ENCODE measurements at regions of chr11 and their contacts with region 1.

Region 1: DNA sequence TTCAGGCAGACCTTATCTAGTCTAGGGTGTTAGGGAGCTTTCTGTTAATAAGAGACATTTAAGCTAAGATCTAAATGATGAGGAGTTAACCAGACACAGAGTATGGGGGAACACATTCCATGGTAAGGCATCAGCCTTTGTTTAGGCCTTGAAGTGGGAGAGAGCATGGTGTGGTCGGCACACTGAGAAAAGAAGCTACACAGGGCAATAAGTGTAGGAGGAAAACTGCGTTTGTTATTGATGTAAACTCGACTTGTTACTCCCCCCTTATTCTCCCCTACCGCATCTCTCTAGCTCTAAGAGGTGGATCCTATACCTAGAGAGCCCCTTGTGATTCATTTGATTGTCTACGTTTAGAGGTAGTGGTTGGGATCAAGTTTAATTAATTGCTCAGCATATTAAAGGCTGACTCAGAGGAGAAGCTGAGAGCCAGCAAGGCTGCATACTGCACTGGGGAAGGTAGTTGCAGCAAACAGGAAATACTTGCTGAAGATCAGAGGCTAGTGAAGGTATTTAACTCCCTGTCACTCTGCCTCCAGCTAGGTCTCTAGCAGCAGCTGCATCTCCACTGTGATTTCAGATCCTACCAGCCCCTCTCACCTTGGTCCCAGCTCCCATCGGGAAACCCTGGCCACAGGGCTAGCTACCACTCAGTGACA is 86.8 kb upstream of the TEAD1 start:
- DNase-seq: peak in 3 of 9 donors; percentile 5 to 24 (median 14)
- ATAC-seq: peak; percentile 22
- H3K4me3 ChIP-seq: no peak overlapping the region
- H3K4me3 Mint-ChIP-seq: no peak overlapping the region
- H3K27ac ChIP-seq: no peak overlapping the region
- H3K27ac Mint-ChIP-seq: no peak overlapping the region
- H3K4me1 ChIP-seq: peaks cover 0 to 3% of the 10 kb centered on the region in 2 donors
- H3K4me1 Mint-ChIP-seq: peaks cover 0 to 19% (median 10%) of the 10 kb centered on the region in 7 donors
- H3K27me3 ChIP-seq: no peaks in the 10 kb centered on the region
- H3K27me3 Mint-ChIP-seq: peaks cover 6 to 32% (median 14%) of the 10 kb centered on the region in 5 donors

Region 2: DNA sequence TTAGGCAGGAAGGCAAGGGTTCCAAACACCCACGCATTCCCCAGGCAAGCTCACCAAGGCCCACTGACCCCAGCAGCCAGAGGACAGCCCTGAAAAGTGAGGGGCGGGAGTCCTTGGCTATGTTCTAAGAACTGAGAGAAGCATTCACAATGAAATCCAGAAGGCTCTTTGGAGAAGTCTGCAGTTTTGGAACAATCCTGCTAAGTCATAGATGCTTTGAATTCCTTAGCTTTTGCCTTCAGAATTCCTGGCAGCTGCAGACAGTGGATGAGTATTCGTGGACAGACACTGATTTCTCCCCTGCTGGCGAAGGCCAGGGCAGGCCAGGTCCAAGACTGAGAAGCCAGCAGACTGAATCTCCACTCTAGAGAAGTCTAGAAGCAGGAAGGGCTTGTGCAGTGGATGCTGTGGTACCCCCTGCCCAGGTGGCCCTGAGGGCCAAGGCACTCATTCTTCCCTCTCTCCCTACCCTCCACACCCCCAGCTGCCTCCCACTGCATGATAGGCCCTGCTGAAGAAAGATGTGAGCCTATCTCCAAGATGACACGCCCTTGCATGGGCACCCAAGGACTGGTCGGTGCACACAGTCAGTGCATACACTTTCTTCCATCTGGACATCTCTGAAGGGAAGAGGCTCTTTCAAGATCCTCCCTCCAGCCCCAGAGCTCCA is 46.4 kb before region 1 on chr11:
- CTCF ChIA-PET with region 1: no interaction called
- POLR2A ChIA-PET with region 1: no interaction called
- intact Hi-C with region 1: no loop called
- DNase-seq: no peak
- ATAC-seq: no peak
- H3K4me3 ChIP-seq: no peak overlapping the region
- H3K4me3 Mint-ChIP-seq: no peak overlapping the region
- H3K27ac ChIP-seq: no peak overlapping the region
- H3K27ac Mint-ChIP-seq: no peak overlapping the region
- H3K4me1 ChIP-seq: no peaks in the 10 kb centered on the region
- H3K4me1 Mint-ChIP-seq: no peaks in the 10 kb centered on the region
- H3K27me3 ChIP-seq: no peaks in the 10 kb centered on the region
- H3K27me3 Mint-ChIP-seq: peaks cover 8 to 30% (median 18%) of the 10 kb centered on the region in 5 donors

Region 3: GRCh38 chr11:12599408-12600143 is 12.1 kb after region 1 on chr11:
- CTCF ChIA-PET with region 1: no interaction called
- POLR2A ChIA-PET with region 1: interaction called, 6 read pairs
- intact Hi-C with region 1: loop called in 1 of 2 experiments (anchors 1 kb)
- DNase-seq: peak in 5 of 9 donors; percentile 8 to 57 (median 13)
- ATAC-seq: peak; percentile 26
- H3K4me3 ChIP-seq: no peak overlapping the region
- H3K4me3 Mint-ChIP-seq: no peak overlapping the region
- H3K27ac ChIP-seq: no peak overlapping the region
- H3K27ac Mint-ChIP-seq: peak overlapping the region in 1 of 9 donors; percentile 25
- H3K4me1 ChIP-seq: peaks cover 0 to 17% of the 10 kb centered on the region in 2 donors
- H3K4me1 Mint-ChIP-seq: peaks cover 3 to 25% (median 18%) of the 10 kb centered on the region in 7 donors
- H3K27me3 ChIP-seq: no peaks in the 10 kb centered on the region
- H3K27me3 Mint-ChIP-seq: peaks cover 16 to 45% (median 28%) of the 10 kb centered on the region in 5 donors

Measured in naive thymus-derived CD4-positive, alpha-beta T cell (primary cell).